K562 (cell line): ENCODE measurements at regions of chrX and their contacts with region 1.

Region 1: DNA sequence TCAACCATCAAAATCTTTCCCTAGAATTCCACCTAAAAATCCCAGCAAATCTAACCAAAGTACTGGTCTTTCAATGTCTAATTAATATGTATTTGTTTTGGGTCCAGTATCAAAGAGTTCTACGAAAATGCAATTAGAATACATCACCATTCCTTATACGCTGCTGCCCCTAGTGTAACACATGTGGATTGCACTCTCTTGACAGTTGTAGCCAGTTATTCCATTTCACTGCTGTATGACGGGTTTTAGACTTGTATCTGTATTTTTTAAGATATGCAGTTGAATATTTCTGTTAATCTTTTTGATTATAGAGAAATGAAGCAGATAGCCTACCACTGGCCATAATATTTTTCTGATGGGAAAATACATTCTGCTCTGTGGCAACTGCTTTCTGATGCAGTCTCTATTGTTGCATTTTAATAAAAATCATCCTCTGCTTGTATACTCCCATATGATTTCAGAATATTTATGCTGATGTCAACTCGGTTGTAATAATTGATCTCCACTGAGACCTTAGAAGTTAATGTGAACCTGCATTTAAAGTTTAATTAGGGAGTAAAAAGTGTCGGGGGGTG is 17.1 kb upstream of the PAGE2B start:
- DNase-seq: peak; percentile 22 to 57 (median 32)
- ATAC-seq: peak; percentile 87
- H3K4me3 ChIP-seq: no peak overlapping the region
- H3K27ac ChIP-seq: no peak overlapping the region
- H3K4me1 ChIP-seq: peaks cover 0 to 2% of the 10 kb centered on the region in 2 experiments; a peak in 2 of 5 replicates
- H3K27me3 ChIP-seq: no peaks in the 10 kb centered on the region
- CTCF ChIP-seq: peak; percentile 62 to 77 (median 68)
- EP300 ChIP-seq: no peak
- POLR2A ChIP-seq: no peak
- RAD21 ChIP-seq: peak; percentile 79 to 89

Region 2: DNA sequence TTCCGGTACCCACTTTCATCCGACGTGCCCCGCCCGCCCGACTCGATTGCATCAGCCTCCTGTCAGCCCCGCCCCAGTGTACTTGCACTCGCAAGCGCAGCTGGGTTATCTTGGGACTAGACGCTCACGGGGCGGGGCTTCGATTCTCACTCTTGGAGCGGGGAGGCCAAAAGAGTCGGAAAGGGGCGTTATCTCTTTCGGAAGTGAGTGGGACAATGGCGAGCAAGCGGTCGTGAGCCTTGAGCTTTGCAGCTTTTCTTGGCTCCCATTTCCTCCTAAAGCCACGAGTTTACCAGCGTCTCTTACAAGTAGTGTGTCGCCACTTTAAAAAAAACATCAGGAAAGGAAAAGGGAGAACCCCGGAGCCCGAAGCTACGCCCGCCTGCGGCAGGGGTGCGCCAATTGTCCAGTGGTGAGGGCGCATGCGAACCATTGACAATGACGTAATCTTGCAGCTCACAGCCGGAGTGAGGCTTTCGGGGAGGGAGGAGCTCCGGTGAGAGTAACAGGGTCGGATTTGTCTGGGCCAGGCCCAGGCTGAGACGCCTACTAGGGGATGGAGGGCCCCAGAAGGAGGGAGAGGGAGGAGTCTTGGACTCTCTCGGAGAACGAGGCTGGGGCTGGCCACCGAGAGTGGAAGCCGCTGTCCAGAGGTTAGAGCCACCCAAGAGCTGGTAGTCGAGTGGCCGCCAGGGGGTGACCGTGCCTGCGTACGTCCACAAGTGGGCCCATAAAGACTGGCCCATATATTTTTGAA is 418.2 kb before region 1 on chrX:
- CTCF ChIA-PET with region 1: no interaction called
- POLR2A ChIA-PET with region 1: no interaction called
- in situ Hi-C with region 1: loop called (anchors 25 kb)
- intact Hi-C with region 1: loop called (anchors 10 kb)
- DNase-seq: peak; percentile 83 to 96 (median 86)
- ATAC-seq: peak; percentile 99
- H3K4me3 ChIP-seq: peak overlapping the region; percentile 55
- H3K27ac ChIP-seq: peak overlapping the region; percentile 99
- H3K4me1 ChIP-seq: peaks cover 2 to 3% of the 10 kb centered on the region in 2 experiments; a peak in 3 of 5 replicates
- H3K27me3 ChIP-seq: no peaks in the 10 kb centered on the region
- CTCF ChIP-seq: peak; percentile 76 to 83 (median 82)
- EP300 ChIP-seq: peak; percentile 8; the same call in 1 of the 2 replicates
- POLR2A ChIP-seq: peak; percentile 88
- RAD21 ChIP-seq: peak; percentile 50 to 67

Region 3: GRCh38 chrX:54891573-54891972 is 166.2 kb before region 1 on chrX:
- CTCF ChIA-PET with region 1: no interaction called
- POLR2A ChIA-PET with region 1: no interaction called
- in situ Hi-C with region 1: no loop called
- intact Hi-C with region 1: loop called (anchors 10 kb)
- DNase-seq: peak; percentile 16 to 58 (median 17)
- ATAC-seq: peak; percentile 81
- H3K4me3 ChIP-seq: no peak overlapping the region
- H3K27ac ChIP-seq: no peak overlapping the region
- H3K4me1 ChIP-seq: no peaks in the 10 kb centered on the region
- H3K27me3 ChIP-seq: no peaks in the 10 kb centered on the region
- CTCF ChIP-seq: peak; percentile 36 to 53 (median 38); a peak in 4 of 6 replicates
- EP300 ChIP-seq: no peak
- POLR2A ChIP-seq: no peak
- RAD21 ChIP-seq: peak; percentile 51 to 74

Region 4: DNA sequence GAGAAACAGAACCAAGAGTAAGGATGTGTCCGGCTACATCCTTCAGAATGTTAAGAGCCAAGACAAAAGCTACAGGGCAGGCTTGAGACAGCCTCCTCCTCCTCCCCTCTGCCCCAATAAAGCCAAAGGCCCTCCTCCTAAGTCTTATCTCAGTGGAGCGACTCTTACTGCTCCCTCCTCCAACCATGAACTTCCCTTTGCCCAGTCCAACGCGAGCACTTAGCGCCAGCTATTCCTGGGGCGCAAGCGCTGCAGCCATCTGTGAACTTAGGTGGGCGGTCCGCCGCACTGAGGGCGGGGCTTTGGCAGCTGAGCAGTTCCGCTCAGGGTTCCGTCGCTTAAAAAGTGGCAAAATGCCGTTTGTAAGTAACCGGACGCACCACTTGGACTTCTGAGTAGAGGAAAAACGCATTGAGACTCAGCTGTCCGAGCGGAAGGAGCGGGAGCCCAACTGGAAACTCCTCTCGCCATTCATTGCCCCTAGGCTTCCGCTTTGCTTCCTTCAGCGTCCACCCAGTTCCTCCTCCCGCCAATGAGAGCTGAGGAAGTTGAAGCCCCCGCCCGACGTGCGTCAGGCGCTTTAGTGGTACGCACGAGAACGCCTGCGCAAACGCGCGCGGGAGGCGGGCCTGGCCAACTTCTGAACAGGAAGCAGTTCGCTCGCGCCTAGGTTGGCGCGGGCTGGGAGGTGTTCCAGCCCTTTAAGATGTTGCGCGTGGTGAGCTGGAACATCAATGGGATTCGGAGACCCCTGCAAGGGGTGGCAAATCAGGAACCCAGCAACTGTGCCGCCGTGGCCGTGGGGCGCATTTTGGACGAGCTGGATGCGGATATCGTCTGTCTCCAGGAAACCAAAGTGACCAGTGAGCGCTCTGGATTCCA is 57.8 kb before region 1 on chrX and contains the start of gene APEX2:
- CTCF ChIA-PET with region 1: no interaction called
- POLR2A ChIA-PET with region 1: no interaction called
- in situ Hi-C with region 1: no loop called
- intact Hi-C with region 1: loop called (anchors 10 kb)
- DNase-seq: peak; percentile 79 to 94 (median 83)
- ATAC-seq: peak; percentile 97
- H3K4me3 ChIP-seq: peak within 1 kb of the TSS; percentile 60
- H3K27ac ChIP-seq: peak within 1 kb of the TSS; percentile 94
- H3K4me1 ChIP-seq: peaks cover 4 to 13% of the 10 kb centered on the region in 2 experiments; a peak in 3 of 5 replicates
- H3K27me3 ChIP-seq: 0 out of 5 replicates have a peak, but pooled peaks cover 0 to under 1% of the 10 kb centered on the region in 2 experiments
- CTCF ChIP-seq: no peak
- EP300 ChIP-seq: no peak
- POLR2A ChIP-seq: peak; percentile 88
- RAD21 ChIP-seq: no peak
- polyA plus RNA-seq, gene APEX2: 16.4 to 34.2 TPM

Region 5: DNA sequence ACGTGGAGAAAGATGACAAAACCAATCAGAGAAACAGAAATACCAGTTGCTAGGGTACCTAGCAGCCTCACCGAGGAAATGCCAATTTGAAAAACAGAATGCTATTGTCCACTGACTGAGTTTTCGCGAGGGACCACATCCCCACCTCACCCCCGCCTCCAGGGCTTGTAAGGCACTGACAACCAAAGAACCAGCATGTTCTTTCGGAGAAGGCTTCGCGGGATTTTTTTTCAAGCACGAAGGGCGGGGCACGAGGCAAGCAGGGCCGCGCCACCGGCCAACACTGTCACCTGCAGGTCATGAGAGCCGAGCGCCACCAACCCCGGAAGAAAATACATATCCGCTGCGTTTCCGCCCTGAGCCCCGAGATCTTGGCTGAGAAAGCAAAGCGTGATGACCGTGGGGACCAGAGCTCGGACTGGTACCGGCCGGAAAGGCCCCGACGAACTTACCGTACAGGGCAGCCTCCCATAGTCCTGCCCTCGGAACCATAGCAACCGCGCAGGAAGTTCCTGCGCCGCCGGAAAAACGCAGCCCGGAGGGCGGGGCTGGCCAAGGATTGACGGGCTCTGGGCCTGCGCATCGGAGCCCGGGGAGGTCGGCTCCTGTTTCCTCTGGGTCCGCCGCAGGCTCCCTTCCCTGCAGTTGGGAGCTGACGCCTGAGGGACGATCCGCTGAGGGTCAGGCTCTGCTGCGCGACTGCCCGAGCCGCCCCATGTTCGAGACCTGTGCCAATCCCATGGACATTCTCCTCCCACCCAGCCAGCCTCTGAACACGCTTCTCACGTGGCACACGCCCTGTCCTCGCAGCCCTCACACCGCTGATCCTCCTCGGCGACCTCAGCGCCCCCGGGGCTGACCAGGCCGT is 103.2 kb after region 1 on chrX:
- CTCF ChIA-PET with region 1: no interaction called
- POLR2A ChIA-PET with region 1: no interaction called
- in situ Hi-C with region 1: no loop called
- intact Hi-C with region 1: loop called (anchors 1 kb)
- DNase-seq: peak; percentile 70 to 88 (median 76)
- ATAC-seq: peak; percentile 100
- H3K4me3 ChIP-seq: peak overlapping the region; percentile 53
- H3K27ac ChIP-seq: peak overlapping the region; percentile 81
- H3K4me1 ChIP-seq: peaks cover 0 to 9% of the 10 kb centered on the region in 2 experiments; a peak in 3 of 5 replicates
- H3K27me3 ChIP-seq: no peaks in the 10 kb centered on the region
- CTCF ChIP-seq: peak; percentile 78 to 91 (median 81)
- EP300 ChIP-seq: no peak; the same call in 1 of the 2 replicates
- POLR2A ChIP-seq: peak; percentile 73
- RAD21 ChIP-seq: peak; percentile 76 to 84